Activated T-helper 2 cell treated with anti-CD3 and anti-CD28 coated beads, Interferon-gamma antibody, Interleukin-2, Interleukin-4, amounts not matched to agents 10 μg/mL and 5 μg/mL and 100 μg/mL, durations not matched to agents 14 hours and 24 hours and 36 hours (primary cell): ENCODE measurements at regions of chr7 and their contacts with region 1.

Region 1: DNA sequence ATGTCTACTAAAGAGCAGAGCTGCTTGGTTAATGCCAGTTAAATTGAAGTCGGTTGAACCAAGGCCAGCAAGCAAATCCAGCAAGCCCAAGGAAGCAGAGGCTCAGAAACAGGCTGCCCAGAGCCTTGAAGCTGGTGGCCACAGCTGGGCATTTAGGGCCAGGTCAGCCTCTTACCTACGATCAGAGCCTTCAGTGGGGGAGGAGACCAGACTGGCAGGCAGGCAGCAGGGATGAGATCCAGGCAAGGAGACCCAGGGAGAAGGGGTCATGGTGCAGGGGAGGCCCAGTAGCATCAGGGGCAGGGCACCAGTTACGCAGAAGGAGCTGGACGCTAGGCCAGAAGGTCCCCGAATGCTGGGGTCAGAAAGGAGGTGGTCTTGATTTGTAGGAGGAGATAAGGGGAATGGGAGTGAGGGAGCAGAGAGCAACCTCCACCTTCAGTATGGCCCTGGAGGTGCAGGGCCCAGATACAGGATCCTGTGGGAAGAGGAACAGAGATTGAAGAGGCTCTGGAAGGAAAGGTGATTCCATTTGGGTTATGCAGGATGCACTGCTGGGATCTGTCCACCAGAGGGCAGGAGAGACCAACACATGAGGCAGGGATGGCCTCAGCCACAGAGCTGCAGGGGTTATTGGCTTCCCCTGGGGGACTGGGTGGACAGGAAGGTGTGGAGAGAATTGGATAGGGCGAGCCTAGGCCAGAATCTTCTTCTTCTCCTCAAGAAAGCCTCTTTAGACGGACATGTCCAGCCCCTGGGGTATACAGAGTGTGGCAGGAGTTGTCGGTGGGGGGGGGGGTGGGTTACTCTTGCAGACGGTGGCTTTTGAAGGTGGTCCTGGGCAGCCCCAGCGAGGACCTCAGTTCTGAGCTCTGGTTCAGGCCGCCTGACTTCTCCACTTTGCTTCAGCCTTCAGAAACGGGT is 132.6 kb upstream of the PODXL start:
- DNase-seq: peak; percentile 32
- H3K4me3 Mint-ChIP-seq: no peak overlapping the region
- H3K27ac Mint-ChIP-seq: no peak overlapping the region
- H3K4me1 Mint-ChIP-seq: peaks cover 2% of the 10 kb centered on the region
- H3K27me3 Mint-ChIP-seq: peaks cover 10% of the 10 kb centered on the region

Region 2: GRCh38 chr7:132049462-132050304 is 360.7 kb after region 1 on chr7:
- intact Hi-C with region 1: loop called (anchors 2 kb)
- DNase-seq: no peak
- H3K4me3 Mint-ChIP-seq: no peak overlapping the region
- H3K27ac Mint-ChIP-seq: no peak overlapping the region
- H3K4me1 Mint-ChIP-seq: no peaks in the 10 kb centered on the region
- H3K27me3 Mint-ChIP-seq: no peaks in the 10 kb centered on the region